HCT116 (cell line): ENCODE measurements at regions of chr10 and their contacts with region 1.

Region 1: DNA sequence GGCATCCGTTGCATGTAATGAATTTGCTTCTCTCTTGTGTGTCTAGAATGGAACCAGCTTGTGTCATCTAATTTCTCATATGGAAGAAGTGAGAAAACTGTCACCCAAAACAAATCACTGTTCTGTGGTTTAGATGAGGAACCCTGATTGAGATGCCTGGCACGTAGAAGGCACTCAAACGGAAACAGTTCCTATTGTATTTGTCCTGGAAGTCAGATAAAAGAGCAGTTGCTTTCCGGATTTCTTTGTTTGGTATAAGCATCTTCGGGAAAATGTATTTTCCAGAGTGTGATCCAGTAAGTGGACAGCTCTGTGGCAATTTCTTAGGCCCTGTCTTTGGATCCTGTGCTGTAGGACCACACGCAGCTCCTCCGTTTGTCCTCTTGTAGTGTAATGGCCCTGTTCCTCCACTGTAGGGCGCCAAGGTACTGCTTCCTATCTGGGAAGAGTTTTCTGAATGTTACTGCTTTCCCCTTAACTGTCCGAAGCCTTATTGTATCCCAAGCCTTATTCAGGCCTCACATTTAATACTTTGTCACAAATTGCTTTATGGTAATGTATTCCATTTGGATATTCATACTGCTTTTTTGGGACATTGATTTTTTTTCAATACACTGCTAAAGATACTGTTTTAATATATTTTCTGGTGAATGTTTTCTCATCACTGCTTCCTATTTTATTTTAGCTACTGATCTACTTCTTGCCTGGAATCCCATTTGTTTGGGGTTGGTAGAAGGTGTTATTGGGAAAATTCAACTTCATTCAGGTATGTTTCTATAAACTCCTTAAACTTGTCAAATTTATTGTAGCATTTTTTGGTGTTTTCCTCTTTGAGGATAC is 24.8 kb downstream of the INPP5F start:
- DNase-seq: peak; percentile 63
- ATAC-seq: peak; percentile 98
- H3K4me3 ChIP-seq: no peak overlapping the region
- H3K27ac ChIP-seq: no peak overlapping the region
- H3K4me1 ChIP-seq: no peaks in the 10 kb centered on the region
- H3K27me3 ChIP-seq: no peaks in the 10 kb centered on the region
- CTCF ChIP-seq: peak; percentile 89 to 99 (median 99)
- POLR2A ChIP-seq: no peak
- RAD21 ChIP-seq: peak; percentile 97

Region 2: DNA sequence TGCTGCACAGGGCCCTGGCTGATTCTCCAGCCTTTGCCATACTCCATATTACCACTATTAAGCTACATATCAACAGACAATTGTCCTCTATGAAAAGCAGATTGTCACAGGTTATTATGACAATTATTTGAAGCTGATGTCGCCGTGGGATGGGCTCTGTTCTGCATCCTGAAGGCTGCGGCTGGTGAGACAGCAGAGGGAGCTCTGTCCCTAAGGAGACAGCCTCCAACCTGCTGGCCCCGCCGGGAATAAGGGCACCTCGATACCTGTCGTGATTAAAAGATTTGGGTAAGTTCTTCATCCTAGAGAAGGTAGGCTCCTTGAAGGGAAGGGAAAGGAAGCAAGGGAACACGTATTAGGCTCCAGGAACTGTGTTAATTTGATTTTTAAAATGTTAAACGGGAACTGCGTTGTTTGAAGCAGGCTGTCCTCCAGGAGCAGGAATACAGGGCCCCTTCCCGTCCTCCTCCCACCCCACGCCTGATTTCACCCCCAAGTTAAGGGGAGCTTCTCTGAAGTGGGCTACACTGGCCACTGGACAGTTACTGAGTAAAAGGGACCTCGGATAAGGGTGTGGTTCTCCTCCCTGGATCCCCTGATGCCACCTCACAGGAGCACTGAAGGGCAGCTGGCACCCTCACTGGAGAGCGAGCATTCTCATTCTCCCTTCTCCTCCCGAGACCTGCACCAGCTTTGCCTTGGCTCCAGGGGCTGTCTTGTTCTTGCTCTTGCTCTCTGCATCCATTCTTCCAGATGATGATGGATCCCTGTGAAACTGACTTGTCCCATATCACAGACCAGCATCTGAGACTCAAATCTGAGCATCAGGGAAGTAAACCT is 142.1 kb before region 1 on chr10:
- CTCF ChIA-PET with region 1: interaction called, 12 read pairs
- POLR2A ChIA-PET with region 1: no interaction called
- RAD21 ChIA-PET with region 1: interaction called in 1 of 2 experiments, 4 read pairs
- intact Hi-C with region 1: loop called (anchors 5 kb)
- DNase-seq: peak; percentile 54
- ATAC-seq: peak; percentile 100
- H3K4me3 ChIP-seq: no peak overlapping the region
- H3K27ac ChIP-seq: no peak overlapping the region
- H3K4me1 ChIP-seq: peaks cover 0 to 10% of the 10 kb centered on the region in 2 experiments; a peak in 1 of 4 replicates
- H3K27me3 ChIP-seq: no peaks in the 10 kb centered on the region
- CTCF ChIP-seq: peak; percentile 92 to 97 (median 92)
- POLR2A ChIP-seq: no peak
- RAD21 ChIP-seq: peak; percentile 99

Region 3: DNA sequence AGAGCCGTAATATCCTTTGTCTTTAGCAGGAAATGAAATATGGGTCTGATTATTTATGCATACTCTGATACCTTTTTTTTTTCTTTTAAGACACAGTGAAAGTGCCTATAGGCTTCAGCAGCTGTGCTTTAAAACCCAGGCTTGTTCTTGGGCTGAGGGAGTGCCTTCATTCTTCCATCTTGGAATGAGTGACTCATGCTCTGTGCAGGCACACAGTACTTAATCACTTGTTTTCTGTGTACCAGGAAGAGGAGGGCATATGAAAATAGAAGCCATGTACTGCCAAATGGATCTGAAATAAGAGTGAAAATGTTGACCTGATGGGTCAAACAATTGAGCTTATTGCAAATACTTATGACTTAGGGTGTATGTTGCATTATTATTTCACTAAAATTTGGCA is 12.8 kb before region 1 on chr10:
- CTCF ChIA-PET with region 1: interaction called, 36 read pairs
- POLR2A ChIA-PET with region 1: no interaction called
- RAD21 ChIA-PET with region 1: interaction called in 1 of 2 experiments, 5 read pairs
- intact Hi-C with region 1: no loop called
- DNase-seq: peak; percentile 86
- ATAC-seq: peak; percentile 96
- H3K4me3 ChIP-seq: peak overlapping the region in 1 of 2 experiments; percentile 34; a peak in 2 of 4 replicates
- H3K27ac ChIP-seq: peak overlapping the region; percentile 53; the same call in 1 of the 2 replicates
- H3K4me1 ChIP-seq: peaks cover 40 to 61% of the 10 kb centered on the region in 2 experiments
- H3K27me3 ChIP-seq: no peaks in the 10 kb centered on the region
- CTCF ChIP-seq: no peak
- POLR2A ChIP-seq: no peak
- RAD21 ChIP-seq: 0 out of 2 replicates have a peak, but pooled peaks have one; percentile 11

Region 4: DNA sequence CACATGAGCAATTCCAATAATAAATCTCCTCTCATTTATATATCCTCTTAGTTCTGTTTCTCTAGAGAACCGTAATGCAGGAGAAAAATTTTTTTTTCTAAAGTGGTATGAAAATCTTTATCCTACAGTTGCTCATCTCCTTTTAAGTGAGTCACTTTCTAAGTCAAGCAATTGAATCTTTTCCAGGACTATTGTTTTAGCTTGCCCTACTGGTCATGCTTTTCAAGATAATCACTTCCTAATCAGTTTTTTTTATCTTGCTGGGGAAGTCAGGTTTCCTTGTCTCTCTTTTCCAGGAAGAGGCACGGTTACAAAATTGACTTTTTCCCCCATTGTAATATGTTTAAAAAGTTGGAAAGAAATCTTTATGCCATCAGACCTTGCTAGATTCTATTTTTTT is 19.3 kb after region 1 on chr10:
- CTCF ChIA-PET with region 1: interaction called, 10 read pairs
- POLR2A ChIA-PET with region 1: no interaction called
- RAD21 ChIA-PET with region 1: no interaction called
- intact Hi-C with region 1: no loop called
- DNase-seq: no peak
- ATAC-seq: no peak
- H3K4me3 ChIP-seq: no peak overlapping the region
- H3K27ac ChIP-seq: no peak overlapping the region
- H3K4me1 ChIP-seq: peaks cover 2 to 10% of the 10 kb centered on the region in 2 experiments; a peak in 2 of 4 replicates
- H3K27me3 ChIP-seq: no peaks in the 10 kb centered on the region
- CTCF ChIP-seq: no peak
- POLR2A ChIP-seq: no peak
- RAD21 ChIP-seq: no peak

Region 5: DNA sequence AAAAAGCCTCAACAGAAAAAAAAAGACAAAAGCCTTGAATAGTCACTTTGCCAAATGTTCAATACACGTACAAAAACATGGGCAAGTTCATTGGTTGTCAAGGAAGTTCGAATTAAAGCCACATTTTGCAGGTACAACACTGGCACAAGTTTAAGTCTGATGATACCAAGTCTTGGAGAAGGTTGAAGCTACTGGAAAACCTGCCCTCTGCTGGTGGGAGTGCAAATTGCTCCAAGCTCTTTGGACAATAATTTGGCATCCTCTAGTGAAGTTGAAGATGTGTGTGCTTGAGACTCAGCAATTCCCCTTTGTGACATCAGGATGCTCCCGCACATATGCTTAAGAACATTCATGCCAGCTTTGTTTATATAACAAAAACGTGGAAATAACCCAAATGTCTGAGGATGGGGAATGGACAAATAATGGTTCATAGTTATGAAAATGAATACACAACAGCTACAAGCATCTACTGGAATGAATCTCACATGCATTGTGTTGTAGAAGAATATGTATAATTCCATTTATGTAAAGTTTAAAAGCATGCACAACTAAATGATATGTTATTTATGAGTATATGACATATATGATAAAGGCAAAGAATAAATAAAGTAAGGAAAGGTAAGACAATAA is 586.4 kb after region 1 on chr10:
- CTCF ChIA-PET with region 1: interaction called, 6 read pairs
- POLR2A ChIA-PET with region 1: no interaction called
- RAD21 ChIA-PET with region 1: no interaction called
- intact Hi-C with region 1: loop called (anchors 1 kb)
- DNase-seq: peak; percentile 51
- ATAC-seq: peak; percentile 80
- H3K4me3 ChIP-seq: no peak overlapping the region
- H3K27ac ChIP-seq: no peak overlapping the region
- H3K4me1 ChIP-seq: no peaks in the 10 kb centered on the region
- H3K27me3 ChIP-seq: peaks cover 32% of the 10 kb centered on the region
- CTCF ChIP-seq: peak; percentile 75 to 96 (median 95)
- POLR2A ChIP-seq: no peak
- RAD21 ChIP-seq: peak; percentile 70